Naive thymus-derived CD8-positive, alpha-beta T cell (primary cell): ENCODE measurements at regions of chr12 and their contacts with region 1.

Region 1: DNA sequence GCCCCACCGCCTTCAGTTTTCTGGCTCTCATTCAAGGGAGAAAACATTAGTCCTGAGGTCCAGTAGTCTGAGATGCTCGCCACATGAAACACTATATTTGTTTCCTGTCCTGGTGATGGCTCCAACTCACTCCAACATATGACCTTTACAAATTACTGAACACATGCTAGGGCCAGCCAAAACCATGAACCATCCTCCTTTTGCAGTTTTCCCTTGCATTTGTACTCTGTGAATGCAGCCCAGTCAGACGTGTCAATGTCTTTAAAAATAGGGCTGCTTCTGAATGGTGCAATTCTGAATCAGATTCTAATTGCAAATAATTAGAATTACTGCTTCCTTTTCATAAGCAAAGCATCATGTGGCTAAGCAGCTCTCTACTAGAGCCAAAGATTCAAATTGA is 36.0 kb downstream of the ADAMTS20 start:
- DNase-seq: no peak
- ATAC-seq: no peak
- H3K4me3 Mint-ChIP-seq: no peak overlapping the region
- H3K27ac Mint-ChIP-seq: no peak overlapping the region
- H3K4me1 Mint-ChIP-seq: no peaks in the 10 kb centered on the region
- H3K27me3 Mint-ChIP-seq: peaks cover 2 to 15% (median 3%) of the 10 kb centered on the region in 5 donors

Region 2: DNA sequence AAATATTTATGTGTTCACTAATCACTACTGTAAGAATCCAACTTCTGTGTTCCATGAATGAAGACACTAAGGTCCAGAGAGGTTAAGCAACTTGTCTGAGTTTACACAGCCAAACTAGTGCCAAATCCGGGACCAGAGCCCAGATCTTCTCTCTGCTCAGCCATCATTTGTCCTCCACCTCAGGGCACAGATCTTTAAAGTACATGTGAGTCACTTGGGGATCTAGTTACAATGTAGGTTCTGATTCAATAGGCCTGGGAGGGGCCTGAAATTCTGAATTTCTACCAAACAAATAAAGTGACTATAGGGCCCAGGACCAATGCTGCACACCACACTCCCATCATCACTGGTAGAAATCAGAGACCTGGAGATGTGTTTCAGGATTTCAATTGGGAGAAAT is 1534.3 kb before region 1 on chr12:
- POLR2A ChIA-PET with region 1: no interaction called
- DNase-seq: no peak
- ATAC-seq: no peak
- H3K4me3 Mint-ChIP-seq: no peak overlapping the region
- H3K27ac Mint-ChIP-seq: no peak overlapping the region
- H3K4me1 Mint-ChIP-seq: peaks cover 0 to 2% (median 0%) of the 10 kb centered on the region in 4 donors
- H3K27me3 Mint-ChIP-seq: peaks cover 0 to 14% (median 9%) of the 10 kb centered on the region in 5 donors

Region 3: GRCh38 chr12:43501703-43502102 is 14.3 kb before region 1 on chr12:
- POLR2A ChIA-PET with region 1: no interaction called
- DNase-seq: no peak
- ATAC-seq: no peak
- H3K4me3 Mint-ChIP-seq: no peak overlapping the region
- H3K27ac Mint-ChIP-seq: no peak overlapping the region
- H3K4me1 Mint-ChIP-seq: no peaks in the 10 kb centered on the region
- H3K27me3 Mint-ChIP-seq: peaks cover 0 to 4% (median 0%) of the 10 kb centered on the region in 5 donors

Region 4: DNA sequence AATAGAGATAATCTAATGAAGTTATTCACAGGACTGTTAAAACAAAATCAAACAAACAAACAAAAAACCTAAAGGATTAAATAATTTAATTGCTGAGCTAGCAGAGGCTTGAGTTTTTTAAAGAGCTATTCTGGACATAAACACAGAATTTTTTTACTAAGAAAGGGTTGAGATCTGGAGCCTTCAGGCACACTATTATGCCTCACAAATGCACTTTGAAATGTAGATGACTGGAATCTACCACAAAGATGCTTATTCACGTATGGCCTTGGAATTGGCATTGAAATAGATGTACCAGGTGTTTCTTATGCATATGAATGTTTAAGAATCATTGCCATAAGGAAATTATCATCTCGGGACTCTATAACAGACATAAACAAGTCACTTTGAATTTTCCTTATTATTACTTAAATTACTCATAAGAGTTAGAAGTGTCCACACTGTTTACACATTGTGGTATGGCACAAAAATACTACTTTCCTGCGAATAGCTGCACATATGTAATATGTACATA is 220.9 kb after region 1 on chr12:
- POLR2A ChIA-PET with region 1: interaction called, 11 read pairs
- DNase-seq: no peak
- ATAC-seq: no peak
- H3K4me3 Mint-ChIP-seq: no peak overlapping the region
- H3K27ac Mint-ChIP-seq: no peak overlapping the region
- H3K4me1 Mint-ChIP-seq: peaks cover 0 to 2% (median 0%) of the 10 kb centered on the region in 4 donors
- H3K27me3 Mint-ChIP-seq: no peaks in the 10 kb centered on the region